GM13976 (cell line): ENCODE measurements at regions of chr9 and their contacts with region 1.

Region 1: DNA sequence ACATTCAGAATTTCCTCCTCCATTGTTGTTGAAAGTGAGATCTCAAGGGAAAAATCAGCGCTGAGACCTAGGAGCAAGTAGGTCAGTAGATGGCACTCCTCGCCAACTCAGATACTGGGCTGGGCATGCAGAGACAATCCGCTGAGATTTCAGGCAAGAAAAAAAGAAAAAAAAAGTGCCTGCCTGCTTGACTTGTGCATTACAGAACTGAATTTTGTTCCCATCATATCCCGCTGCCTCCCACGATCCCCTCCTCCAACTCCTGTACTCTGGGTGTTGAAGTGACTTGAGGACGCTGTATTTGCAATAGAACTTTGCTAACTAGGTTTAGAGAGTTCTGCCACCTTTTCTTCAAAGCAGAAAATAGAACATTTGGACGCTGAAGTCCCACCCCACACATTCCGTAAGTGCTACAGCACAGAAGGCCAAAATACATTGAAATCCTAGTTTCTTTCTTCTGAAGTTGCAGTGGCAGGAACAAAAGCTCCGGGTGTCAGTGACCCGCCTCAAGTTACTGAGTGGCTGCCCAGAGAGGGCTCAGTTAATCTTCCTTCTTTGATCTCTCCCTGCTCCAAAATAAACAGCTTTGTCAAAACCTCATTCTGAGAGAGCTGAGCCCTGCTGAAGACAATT is 265.8 kb downstream of the MLLT3 start:
- DNase-seq: peak; percentile 58
- CTCF ChIP-seq: peak; percentile 63

Region 2: GRCh38 chr9:19934301-19934868 is 422.1 kb before region 1 on chr9:
- in situ Hi-C with region 1: loop called (anchors 10 kb)
- DNase-seq: no peak
- CTCF ChIP-seq: no peak

Region 3: GRCh38 chr9:20307621-20308020 is 48.9 kb before region 1 on chr9:
- in situ Hi-C with region 1: no loop called
- DNase-seq: no peak
- CTCF ChIP-seq: no peak

Region 4: GRCh38 chr9:20419533-20419932 is 63.0 kb after region 1 on chr9:
- in situ Hi-C with region 1: no loop called
- DNase-seq: no peak
- CTCF ChIP-seq: no peak

Region 5: GRCh38 chr9:20941174-20941690 is 584.7 kb after region 1 on chr9:
- in situ Hi-C with region 1: loop called (anchors 10 kb)
- DNase-seq: peak; percentile 57
- CTCF ChIP-seq: peak; percentile 82

Region 6: GRCh38 chr9:21110708-21111576 is 754.4 kb after region 1 on chr9:
- in situ Hi-C with region 1: loop called (anchors 25 kb)
- DNase-seq: peak; percentile 60
- CTCF ChIP-seq: peak; percentile 59